ENCODE measurements at regions of chr6 and their contacts with region 1.

Region 1: GRCh38 chr6:30828027-30828960 is 56.0 kb upstream of the DDR1 start:
- DNase-seq: peak; percentile 94
- H3K4me3 Mint-ChIP-seq: peak overlapping the region; percentile 75
- H3K27ac Mint-ChIP-seq: peak overlapping the region; percentile 95
- H3K4me1 Mint-ChIP-seq: peaks cover 66% of the 10 kb centered on the region
- H3K27me3 Mint-ChIP-seq: no peaks in the 10 kb centered on the region

Region 2: DNA sequence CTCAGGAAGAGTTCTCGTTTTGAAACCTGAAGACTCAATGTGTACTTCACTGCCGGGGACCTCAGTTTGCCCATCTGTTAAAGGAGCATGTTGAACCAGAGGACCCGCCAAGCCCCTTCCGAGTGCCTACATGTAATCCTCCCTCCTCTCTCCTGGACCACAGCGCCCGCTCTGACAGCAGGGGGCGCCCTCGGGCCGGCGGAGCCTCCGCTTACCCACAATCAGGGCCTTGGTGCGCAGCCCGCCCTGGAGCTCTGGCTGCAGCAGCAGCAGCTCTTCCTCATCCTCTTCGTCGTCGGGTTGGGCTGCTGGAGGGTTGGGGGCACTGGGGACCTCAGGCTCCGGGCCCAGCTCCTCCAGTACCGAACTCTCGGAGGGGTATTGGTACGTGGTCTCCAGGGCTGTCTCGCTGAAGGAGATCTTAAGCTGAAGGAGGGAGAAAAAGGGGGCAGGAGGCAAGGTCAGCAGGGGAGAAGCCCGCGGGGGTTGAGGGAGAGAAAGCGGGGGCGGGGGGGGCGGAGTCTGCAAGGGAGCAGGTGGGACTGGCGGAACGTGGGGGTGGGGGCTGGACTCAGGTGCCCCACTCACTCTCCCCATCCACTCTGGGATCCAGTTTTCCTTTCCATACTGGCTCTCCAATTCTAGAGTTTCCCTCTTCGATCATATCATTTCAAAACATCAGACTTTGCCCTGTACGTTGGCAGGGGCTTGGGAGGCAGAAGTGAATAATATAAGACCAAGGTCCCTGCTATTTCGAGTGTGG is 149.1 kb before region 1 on chr6:
- CTCF ChIA-PET with region 1: interaction called, 6 read pairs
- intact Hi-C with region 1: loop called (anchors 2 kb)
- DNase-seq: peak; percentile 95
- H3K4me3 Mint-ChIP-seq: peak overlapping the region; percentile 96
- H3K27ac Mint-ChIP-seq: peak overlapping the region; percentile 100
- H3K4me1 Mint-ChIP-seq: peaks cover 21% of the 10 kb centered on the region
- H3K27me3 Mint-ChIP-seq: no peaks in the 10 kb centered on the region

Region 3: GRCh38 chr6:30742316-30743098 is 85.8 kb before region 1 on chr6 and contains the start of gene FLOT1:
- CTCF ChIA-PET with region 1: interaction called, 34 read pairs
- intact Hi-C with region 1: loop called (anchors 1 kb)
- DNase-seq: peak; percentile 96
- H3K4me3 Mint-ChIP-seq: peak within 1 kb of the TSS; percentile 94
- H3K27ac Mint-ChIP-seq: peak within 1 kb of the TSS; percentile 96
- H3K4me1 Mint-ChIP-seq: peaks cover 61% of the 10 kb centered on the region
- H3K27me3 Mint-ChIP-seq: no peaks in the 10 kb centered on the region
- total RNA-seq, gene FLOT1: 162 to 173 TPM

Region 4: DNA sequence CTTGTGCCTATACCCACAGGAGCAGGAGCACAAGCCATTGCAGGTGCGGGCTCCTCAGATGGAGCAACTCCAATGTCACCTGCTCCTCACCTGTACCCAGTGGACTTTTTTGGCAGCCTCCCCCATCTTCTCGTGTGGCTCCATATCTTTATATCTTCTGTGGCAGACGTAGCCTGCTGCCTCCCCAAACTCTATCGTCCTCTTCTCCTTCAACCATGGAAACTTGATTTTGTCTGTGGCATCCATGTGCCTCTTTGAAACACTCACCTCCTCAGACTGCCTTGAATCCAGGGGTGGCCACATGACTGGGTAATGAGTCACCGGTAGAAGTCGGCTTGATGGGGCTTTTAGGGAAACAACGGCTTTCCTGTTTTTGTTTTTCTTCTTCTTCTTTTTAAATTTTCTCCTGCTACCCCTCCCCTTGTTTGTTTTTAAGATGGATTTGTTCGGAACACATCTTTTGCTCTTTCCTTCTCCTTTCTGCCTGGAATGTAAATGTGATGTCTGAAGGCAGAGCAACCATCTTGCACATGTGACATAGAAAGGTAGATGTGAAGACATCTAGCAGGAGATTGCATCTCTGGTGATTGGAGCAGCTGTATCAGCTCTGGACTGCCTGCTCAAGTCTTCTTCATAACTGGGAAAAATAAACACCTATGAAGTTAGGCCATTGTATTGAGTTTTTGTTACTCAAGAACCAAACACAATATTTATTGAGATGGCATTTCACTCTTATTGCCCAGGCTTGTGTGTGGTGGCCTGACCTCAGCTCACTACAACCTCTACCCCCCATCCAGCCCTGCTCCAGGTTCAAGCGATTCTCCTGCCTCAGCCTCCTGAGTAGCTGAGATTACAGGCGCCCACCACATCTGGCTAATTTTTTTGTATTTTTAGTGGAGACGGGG is 13.9 kb before region 1 on chr6:
- CTCF ChIA-PET with region 1: interaction called, 24 read pairs
- intact Hi-C with region 1: loop called (anchors 1 kb)
- DNase-seq: peak; percentile 81
- H3K4me3 Mint-ChIP-seq: peak overlapping the region; percentile 48
- H3K27ac Mint-ChIP-seq: peak overlapping the region; percentile 95
- H3K4me1 Mint-ChIP-seq: peaks cover 94% of the 10 kb centered on the region
- H3K27me3 Mint-ChIP-seq: no peaks in the 10 kb centered on the region

Region 5: DNA sequence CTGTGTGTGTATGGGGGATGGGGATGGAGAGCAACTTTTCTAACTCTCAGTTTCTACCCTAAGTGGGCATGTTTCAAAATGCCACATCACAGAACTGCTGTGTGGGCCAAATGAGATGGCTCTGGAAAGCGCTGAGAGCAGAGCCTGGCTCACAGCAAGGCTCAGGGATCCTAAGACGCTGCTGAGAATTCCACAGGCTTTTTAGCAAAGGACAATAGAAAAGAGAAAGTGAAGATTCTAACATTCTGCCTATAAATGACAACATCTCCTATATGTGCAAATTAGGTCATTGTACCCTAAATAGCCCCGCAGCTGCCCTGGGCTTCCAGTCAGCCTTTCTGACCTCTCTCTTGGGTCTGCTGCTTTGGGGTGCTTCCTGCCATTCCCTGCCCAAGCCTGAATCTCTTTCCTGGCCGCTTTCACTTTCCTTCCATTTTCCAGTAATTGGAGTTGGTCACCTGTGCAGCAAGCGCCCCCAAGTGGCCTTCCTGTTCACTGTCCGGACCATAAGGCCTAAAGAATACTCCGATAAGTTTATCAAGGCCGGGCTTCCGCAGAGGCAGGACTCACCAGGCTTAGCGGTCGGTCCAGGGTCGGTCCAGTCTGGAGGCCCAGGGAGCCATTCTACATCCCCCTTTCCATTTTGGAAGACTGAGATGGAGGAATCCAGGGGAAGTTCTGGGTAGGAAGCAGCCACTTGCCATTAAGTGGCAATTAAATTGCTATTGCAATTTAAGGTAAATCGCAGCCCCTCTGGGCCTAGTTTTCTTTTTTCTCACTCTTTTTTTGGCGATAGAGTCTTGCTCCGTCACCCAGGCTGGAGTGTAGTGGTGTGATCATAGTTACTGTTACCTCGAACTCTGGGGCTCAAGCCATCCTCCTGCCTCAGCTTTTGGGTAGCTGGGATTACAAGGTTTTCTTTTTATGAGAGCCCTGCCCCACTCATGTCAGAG is 49.4 kb after region 1 on chr6:
- CTCF ChIA-PET with region 1: interaction called, 38 read pairs
- intact Hi-C with region 1: loop called (anchors 1 kb)
- DNase-seq: peak; percentile 89
- H3K4me3 Mint-ChIP-seq: peak overlapping the region; percentile 68
- H3K27ac Mint-ChIP-seq: peak overlapping the region; percentile 84
- H3K4me1 Mint-ChIP-seq: peaks cover 23% of the 10 kb centered on the region
- H3K27me3 Mint-ChIP-seq: no peaks in the 10 kb centered on the region

Region 6: GRCh38 chr6:30914076-30914853 is 86.0 kb after region 1 on chr6 and contains the start of gene VARS2:
- CTCF ChIA-PET with region 1: interaction called, 39 read pairs
- intact Hi-C with region 1: loop called (anchors 1 kb)
- DNase-seq: peak; percentile 90
- H3K4me3 Mint-ChIP-seq: peak within 1 kb of the TSS; percentile 87
- H3K27ac Mint-ChIP-seq: peak within 1 kb of the TSS; percentile 86
- H3K4me1 Mint-ChIP-seq: peaks cover 28% of the 10 kb centered on the region
- H3K27me3 Mint-ChIP-seq: no peaks in the 10 kb centered on the region
- total RNA-seq, gene VARS2: 78.1 to 82.8 TPM

Region 7: GRCh38 chr6:31087494-31088089 is 259.3 kb after region 1 on chr6:
- CTCF ChIA-PET with region 1: interaction called, 13 read pairs
- intact Hi-C with region 1: loop called (anchors 1 kb)
- DNase-seq: peak; percentile 95
- H3K4me3 Mint-ChIP-seq: no peak overlapping the region
- H3K27ac Mint-ChIP-seq: no peak overlapping the region
- H3K4me1 Mint-ChIP-seq: peaks cover 10% of the 10 kb centered on the region
- H3K27me3 Mint-ChIP-seq: no peaks in the 10 kb centered on the region